B cell (primary cell): ENCODE measurements at regions of chr16 and their contacts with region 1.

Region 1: GRCh38 chr16:90022209-90023064 is 3.2 kb upstream of the DBNDD1 start:
- DNase-seq: peak; percentile 80
- ATAC-seq: peak; percentile 72
- H3K4me3 ChIP-seq: peak overlapping the region; percentile 8 to 50 (median 42)
- H3K4me3 Mint-ChIP-seq: peak overlapping the region; percentile 81
- H3K27ac ChIP-seq: peak overlapping the region in 1 of 2 donors; percentile 46
- H3K27ac Mint-ChIP-seq: peak overlapping the region; percentile 15
- H3K4me1 ChIP-seq: peaks cover 33 to 48% of the 10 kb centered on the region in 2 donors
- H3K4me1 Mint-ChIP-seq: peaks cover 31% of the 10 kb centered on the region
- H3K27me3 ChIP-seq: peaks cover 0 to 21% (median 6%) of the 10 kb centered on the region in 4 experiments
- H3K27me3 Mint-ChIP-seq: peaks cover 9% of the 10 kb centered on the region
- CTCF ChIP-seq: no peak

Region 2: DNA sequence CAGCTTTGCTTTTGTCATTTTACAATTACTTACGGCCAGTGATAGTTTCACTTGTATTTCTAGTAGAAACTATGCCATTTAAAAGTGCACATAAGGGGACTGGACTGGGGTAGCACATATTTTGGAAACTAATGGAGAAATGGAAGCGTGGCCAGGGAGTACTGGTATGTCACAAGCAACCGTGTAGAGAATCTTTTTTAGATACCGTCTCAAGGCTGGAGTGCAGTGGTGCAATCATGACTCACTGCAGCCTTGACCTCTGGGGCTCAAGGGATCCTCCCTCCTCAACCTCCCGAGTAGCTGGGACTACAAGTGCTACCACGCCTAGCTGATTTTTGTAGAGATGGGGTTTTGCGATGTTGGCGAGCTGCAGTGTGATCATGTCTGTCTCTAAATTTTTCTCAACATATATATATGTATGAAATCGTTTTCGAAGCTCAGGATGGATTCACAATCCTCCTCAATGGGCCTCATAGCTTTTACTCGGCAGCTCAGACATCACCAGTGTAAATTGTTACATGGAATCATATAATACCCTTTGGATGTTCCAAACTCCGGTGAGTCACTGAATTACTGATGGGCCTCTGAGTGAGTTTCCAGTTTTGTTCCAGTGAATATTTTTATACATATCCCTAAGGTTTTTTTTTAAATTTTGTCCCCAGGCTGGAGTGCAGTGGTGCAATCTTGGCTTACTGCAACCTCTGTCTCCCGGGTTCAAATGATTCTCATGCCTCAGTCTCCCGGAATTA is 753.3 kb before region 1 on chr16:
- CTCF ChIA-PET with region 1: no interaction called
- POLR2A ChIA-PET with region 1: no interaction called
- intact Hi-C with region 1: no loop called
- DNase-seq: no peak
- ATAC-seq: no peak
- H3K4me3 ChIP-seq: no peak overlapping the region
- H3K4me3 Mint-ChIP-seq: no peak overlapping the region
- H3K27ac ChIP-seq: no peak overlapping the region
- H3K27ac Mint-ChIP-seq: no peak overlapping the region
- H3K4me1 ChIP-seq: no peaks in the 10 kb centered on the region
- H3K4me1 Mint-ChIP-seq: no peaks in the 10 kb centered on the region
- H3K27me3 ChIP-seq: no peaks in the 10 kb centered on the region
- H3K27me3 Mint-ChIP-seq: no peaks in the 10 kb centered on the region
- CTCF ChIP-seq: no peak

Region 3: GRCh38 chr16:89922884-89923690 is 99.3 kb before region 1 on chr16 and contains the start of gene TUBB3:
- CTCF ChIA-PET with region 1: no interaction called
- POLR2A ChIA-PET with region 1: no interaction called
- intact Hi-C with region 1: loop called (anchors 10 kb)
- DNase-seq: peak; percentile 68
- ATAC-seq: peak; percentile 43
- H3K4me3 ChIP-seq: peak within 1 kb of the TSS; percentile 32 to 55 (median 39)
- H3K4me3 Mint-ChIP-seq: peak within 1 kb of the TSS; percentile 77
- H3K27ac ChIP-seq: no peak within 1 kb of the TSS
- H3K27ac Mint-ChIP-seq: no peak within 1 kb of the TSS
- H3K4me1 ChIP-seq: peaks cover 63 to 65% of the 10 kb centered on the region in 2 donors
- H3K4me1 Mint-ChIP-seq: peaks cover 45% of the 10 kb centered on the region
- H3K27me3 ChIP-seq: peaks cover 0 to 88% (median 47%) of the 10 kb centered on the region in 4 experiments
- H3K27me3 Mint-ChIP-seq: peaks cover 27% of the 10 kb centered on the region
- CTCF ChIP-seq: no peak
- total RNA-seq, gene TUBB3: 0.34 and 0.70 TPM in 2 replicates

Region 4: DNA sequence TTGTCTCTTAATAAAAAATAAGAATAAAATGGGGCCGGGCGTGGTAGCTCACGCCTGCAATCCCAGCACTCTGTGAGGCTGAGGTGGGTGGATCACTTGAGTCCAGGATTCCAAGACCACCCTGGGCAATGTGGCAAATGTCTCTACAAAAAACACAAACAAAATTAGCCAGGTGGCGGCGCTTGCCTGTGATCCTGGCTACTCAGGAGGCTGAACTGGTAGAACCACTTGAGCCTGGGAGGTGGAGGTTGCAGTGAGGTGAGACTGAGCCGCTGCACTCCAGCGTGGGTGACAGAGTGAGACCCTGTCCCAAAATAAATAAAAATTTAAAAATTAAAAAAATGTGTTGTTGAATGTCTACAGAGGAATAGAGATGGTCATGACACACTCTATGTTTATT is 76.8 kb before region 1 on chr16:
- CTCF ChIA-PET with region 1: interaction called, 5 read pairs
- POLR2A ChIA-PET with region 1: no interaction called
- intact Hi-C with region 1: loop called (anchors 5 kb)
- DNase-seq: no peak
- ATAC-seq: no peak
- H3K4me3 ChIP-seq: no peak overlapping the region
- H3K4me3 Mint-ChIP-seq: no peak overlapping the region
- H3K27ac ChIP-seq: no peak overlapping the region
- H3K27ac Mint-ChIP-seq: no peak overlapping the region
- H3K4me1 ChIP-seq: peaks cover 46 to 58% of the 10 kb centered on the region in 2 donors
- H3K4me1 Mint-ChIP-seq: peaks cover 43% of the 10 kb centered on the region
- H3K27me3 ChIP-seq: peaks cover 0 to 6% (median 1%) of the 10 kb centered on the region in 4 experiments
- H3K27me3 Mint-ChIP-seq: peaks cover 24% of the 10 kb centered on the region
- CTCF ChIP-seq: no peak

Region 5: GRCh38 chr16:90046122-90046970 is 23.9 kb after region 1 on chr16:
- CTCF ChIA-PET with region 1: no interaction called
- POLR2A ChIA-PET with region 1: no interaction called
- intact Hi-C with region 1: no loop called
- DNase-seq: no peak
- ATAC-seq: no peak
- H3K4me3 ChIP-seq: no peak overlapping the region
- H3K4me3 Mint-ChIP-seq: no peak overlapping the region
- H3K27ac ChIP-seq: no peak overlapping the region
- H3K27ac Mint-ChIP-seq: peak overlapping the region; percentile 15
- H3K4me1 ChIP-seq: peaks cover 13 to 15% of the 10 kb centered on the region in 2 donors
- H3K4me1 Mint-ChIP-seq: peaks cover 7% of the 10 kb centered on the region
- H3K27me3 ChIP-seq: peaks cover 0 to 28% (median 13%) of the 10 kb centered on the region in 4 experiments
- H3K27me3 Mint-ChIP-seq: peaks cover 18% of the 10 kb centered on the region
- CTCF ChIP-seq: no peak